CD14-positive monocyte (primary cell): ENCODE measurements at regions of chr21 and their contacts with region 1.

Region 1: GRCh38 chr21:45287438-45288391 is at the start of gene POFUT2:
- DNase-seq: peak; percentile 95 to 97 (median 97)
- H3K4me3 ChIP-seq: peak within 1 kb of the TSS; percentile 67 to 87 (median 82)
- H3K4me3 Mint-ChIP-seq: peak within 1 kb of the TSS; percentile 81 to 82
- H3K27ac ChIP-seq: peak within 1 kb of the TSS in 1 of 2 donors; percentile 81
- H3K27ac Mint-ChIP-seq: peak within 1 kb of the TSS; percentile 72 to 97 (median 90)
- H3K4me1 ChIP-seq: peaks cover 19 to 23% of the 10 kb centered on the region in 2 donors
- H3K4me1 Mint-ChIP-seq: peaks cover 20% of the 10 kb centered on the region
- H3K27me3 ChIP-seq: no peaks in the 10 kb centered on the region
- H3K27me3 Mint-ChIP-seq: no peaks in the 10 kb centered on the region
- CTCF ChIP-seq: no peak
- polyA plus RNA-seq, gene POFUT2: 1.8 to 21.3 (median 2.8) TPM

Region 2: DNA sequence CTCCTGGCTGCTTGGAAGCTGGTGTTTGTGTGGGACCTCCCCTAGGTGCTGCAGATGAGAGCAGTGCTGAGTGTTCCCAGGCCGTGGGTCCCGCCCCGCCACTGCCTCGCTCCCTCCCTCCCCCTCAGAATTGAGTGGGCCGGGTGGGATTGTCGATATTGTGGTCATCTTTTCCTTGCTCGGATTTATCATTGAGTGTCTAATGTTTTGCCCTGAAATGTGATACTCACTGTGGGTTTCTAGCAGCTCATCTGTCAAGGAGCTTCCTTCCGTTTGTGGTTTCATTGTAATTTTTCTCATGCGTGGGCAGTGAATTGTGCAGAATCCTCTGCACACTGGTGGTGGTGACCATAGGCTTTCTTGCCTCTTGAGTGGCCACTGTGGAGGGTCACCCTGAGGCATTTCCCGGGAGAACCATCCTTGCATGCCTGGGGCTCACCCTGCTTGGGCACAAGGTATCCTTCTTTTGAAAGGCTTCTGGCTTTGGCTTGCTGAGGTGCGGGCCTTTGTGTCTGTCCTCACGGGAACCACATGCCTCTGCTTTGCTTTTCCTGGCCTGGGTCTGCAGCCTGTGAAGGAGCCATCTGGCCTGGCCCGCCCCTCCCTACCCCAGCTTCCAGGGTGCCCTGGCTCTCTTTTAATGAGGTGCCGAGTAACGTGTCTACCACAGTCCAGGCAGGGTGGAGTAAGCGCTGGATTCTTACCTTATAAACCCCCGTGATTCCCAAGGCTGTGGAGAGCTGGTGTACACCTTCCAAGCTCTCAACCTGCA is 322.3 kb before region 1 on chr21:
- intact Hi-C with region 1: loop called in 1 of 2 experiments (anchors 5 kb)
- DNase-seq: peak; percentile 15 to 34 (median 18)
- H3K4me3 ChIP-seq: peak overlapping the region in 1 of 3 experiments; percentile 23
- H3K4me3 Mint-ChIP-seq: peak overlapping the region; percentile 41 to 65
- H3K27ac ChIP-seq: no peak overlapping the region
- H3K27ac Mint-ChIP-seq: peak overlapping the region in 6 of 7 donors; percentile 16 to 93 (median 35)
- H3K4me1 ChIP-seq: peaks cover 59% of the 10 kb centered on the region in 2 donors
- H3K4me1 Mint-ChIP-seq: peaks cover 60% of the 10 kb centered on the region
- H3K27me3 ChIP-seq: no peaks in the 10 kb centered on the region
- H3K27me3 Mint-ChIP-seq: peaks cover 1 to 9% (median 3%) of the 10 kb centered on the region in 3 donors
- CTCF ChIP-seq: no peak

Region 3: GRCh38 chr21:45140346-45140940 is 147.3 kb before region 1 on chr21:
- intact Hi-C with region 1: loop called (anchors 5 to 10 kb)
- DNase-seq: peak; percentile 74 to 81 (median 77)
- H3K4me3 ChIP-seq: no peak overlapping the region
- H3K4me3 Mint-ChIP-seq: no peak overlapping the region
- H3K27ac ChIP-seq: no peak overlapping the region
- H3K27ac Mint-ChIP-seq: peak overlapping the region in 2 of 7 donors; percentile 26 to 65
- H3K4me1 ChIP-seq: peaks cover 0 to 4% of the 10 kb centered on the region in 2 donors
- H3K4me1 Mint-ChIP-seq: peaks cover 6% of the 10 kb centered on the region
- H3K27me3 ChIP-seq: no peaks in the 10 kb centered on the region
- H3K27me3 Mint-ChIP-seq: peaks cover 0 to 2% (median 1%) of the 10 kb centered on the region in 3 donors
- CTCF ChIP-seq: peak; percentile 87

Region 4: DNA sequence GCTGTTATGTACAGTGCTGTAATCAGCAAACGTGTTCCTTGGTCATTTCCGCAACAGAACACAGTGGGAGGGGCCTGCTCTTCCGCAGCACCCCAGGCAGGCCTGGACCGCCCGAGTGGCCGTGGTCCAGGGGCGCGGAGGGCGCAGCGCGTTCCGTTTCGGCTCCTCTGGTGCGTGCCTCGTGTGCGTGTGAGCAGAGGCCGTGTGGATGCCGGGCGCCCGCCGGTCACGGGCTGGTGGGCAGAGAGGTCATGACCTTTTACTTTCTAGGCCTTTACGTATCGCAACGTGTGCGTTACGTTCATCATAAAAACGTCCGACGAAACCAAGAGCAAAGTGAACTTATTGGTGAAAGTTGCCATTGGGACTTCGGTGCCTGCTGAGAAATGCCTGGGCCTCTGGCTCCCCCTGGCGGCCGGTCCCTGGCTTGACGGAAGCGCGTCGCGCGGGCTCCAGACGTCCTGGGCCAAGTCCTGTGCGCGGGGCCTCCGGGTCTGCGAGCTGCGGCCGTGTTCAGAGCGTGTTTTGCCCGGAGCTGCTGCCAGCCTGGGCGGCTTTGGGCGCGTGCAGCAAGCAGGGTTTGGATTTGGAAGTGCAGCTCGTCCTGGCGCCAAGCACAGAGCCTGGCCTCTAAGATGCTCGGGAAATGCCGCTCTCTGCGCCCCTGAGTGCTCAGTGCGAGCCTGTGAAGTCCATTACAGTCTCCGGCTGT is 151.6 kb after region 1 on chr21:
- intact Hi-C with region 1: loop called (anchors 2 kb)
- DNase-seq: peak; percentile 85 to 90 (median 85)
- H3K4me3 ChIP-seq: peak overlapping the region; percentile 4 to 71 (median 20)
- H3K4me3 Mint-ChIP-seq: peak overlapping the region; percentile 67 to 80
- H3K27ac ChIP-seq: peak overlapping the region; percentile 45 to 78
- H3K27ac Mint-ChIP-seq: peak overlapping the region in 6 of 7 donors; percentile 72 to 87 (median 82)
- H3K4me1 ChIP-seq: peaks cover 16 to 21% of the 10 kb centered on the region in 2 donors
- H3K4me1 Mint-ChIP-seq: peaks cover 19% of the 10 kb centered on the region
- H3K27me3 ChIP-seq: no peaks in the 10 kb centered on the region
- H3K27me3 Mint-ChIP-seq: peaks cover 2 to 6% (median 4%) of the 10 kb centered on the region in 3 donors
- CTCF ChIP-seq: peak; percentile 95

Region 5: DNA sequence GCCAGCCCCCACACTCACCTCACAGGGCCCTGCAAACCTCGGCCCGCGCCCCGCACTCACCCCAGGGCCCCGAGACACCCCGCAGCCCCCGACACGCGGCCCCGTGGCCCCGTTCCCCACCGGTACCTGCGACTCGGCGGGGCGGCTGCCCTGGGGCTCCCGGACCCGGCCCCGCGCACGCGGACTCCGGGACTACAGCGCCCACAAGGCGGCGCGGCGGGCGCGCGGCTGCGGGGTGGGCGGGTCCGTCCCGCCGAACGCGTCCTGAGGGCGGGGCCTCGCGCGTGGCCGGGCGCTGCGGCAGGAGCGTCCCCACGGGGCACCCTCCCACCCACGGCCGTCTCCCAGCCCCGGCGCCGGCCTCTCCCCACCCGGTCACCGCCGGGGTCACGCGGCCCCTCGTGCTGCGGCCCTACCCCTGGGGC is 254.5 kb after region 1 on chr21 and contains the start of gene SLC19A1:
- intact Hi-C with region 1: loop called in 1 of 2 experiments (anchors 10 kb)
- DNase-seq: peak; percentile 65 to 70 (median 69)
- H3K4me3 ChIP-seq: peak within 1 kb of the TSS; percentile 42 to 77 (median 43)
- H3K4me3 Mint-ChIP-seq: peak within 1 kb of the TSS; percentile 70 to 78
- H3K27ac ChIP-seq: peak within 1 kb of the TSS; percentile 58 to 87
- H3K27ac Mint-ChIP-seq: peak within 1 kb of the TSS; percentile 68 to 84 (median 79)
- H3K4me1 ChIP-seq: peaks cover 32 to 49% of the 10 kb centered on the region in 2 donors
- H3K4me1 Mint-ChIP-seq: peaks cover 38% of the 10 kb centered on the region
- H3K27me3 ChIP-seq: no peaks in the 10 kb centered on the region
- H3K27me3 Mint-ChIP-seq: peaks cover 0 to 6% (median 0%) of the 10 kb centered on the region in 3 donors
- CTCF ChIP-seq: peak; percentile 49
- polyA plus RNA-seq, gene SLC19A1: 25.0 to 53.0 (median 39.9) TPM

Region 6: DNA sequence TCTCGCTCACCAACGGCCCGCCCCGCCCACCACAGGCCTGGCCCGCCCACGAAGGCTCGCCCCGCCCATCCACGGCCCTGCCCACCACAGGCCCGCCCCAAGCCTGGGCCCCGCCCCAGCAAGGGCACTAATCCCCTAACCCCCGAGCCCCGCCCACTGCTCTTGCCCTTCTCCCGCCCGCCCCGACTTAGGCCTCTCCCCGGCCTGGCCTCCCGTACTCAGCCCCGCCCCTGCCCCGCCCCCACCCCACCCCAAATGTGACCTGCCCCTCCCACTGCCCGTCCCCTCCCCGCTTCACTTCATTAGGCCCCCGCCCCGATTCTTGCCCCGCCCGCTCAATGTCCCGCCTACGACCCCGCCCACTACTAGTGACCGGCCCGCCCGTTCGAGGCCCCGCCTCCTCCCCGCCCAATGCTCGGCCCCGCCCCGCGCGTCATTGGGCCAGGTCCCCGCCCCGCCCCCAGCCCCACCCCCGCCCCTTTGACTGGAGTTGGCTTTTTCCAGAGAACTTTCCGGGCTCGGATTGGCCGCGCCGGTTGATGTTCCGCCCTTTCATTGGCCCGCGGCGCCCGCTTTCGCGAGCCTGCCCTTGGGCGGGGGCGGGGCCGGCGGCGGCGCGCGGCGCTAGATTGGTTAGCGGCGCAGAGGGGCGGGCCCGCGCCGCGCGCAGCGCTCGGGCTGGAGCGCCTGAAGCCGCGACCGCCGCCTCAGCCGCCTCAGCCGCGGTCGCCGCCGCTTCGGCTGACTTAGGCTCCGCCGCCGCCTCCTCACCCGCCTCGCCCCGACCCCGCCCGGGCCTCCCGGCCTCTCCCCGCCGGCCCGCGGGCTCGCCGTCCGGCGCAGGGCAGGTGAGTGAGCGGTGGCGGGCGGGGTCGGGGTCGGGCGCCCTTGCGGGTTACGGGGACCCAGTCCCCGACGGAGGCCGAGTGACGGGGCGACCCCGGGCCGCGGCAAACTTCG is 355.6 kb after region 1 on chr21 and contains the start of gene PCBP3:
- intact Hi-C with region 1: loop called in 1 of 2 experiments (anchors 5 kb)
- DNase-seq: peak; percentile 92 to 95 (median 93)
- H3K4me3 ChIP-seq: peak within 1 kb of the TSS in 2 of 3 experiments; percentile 46 to 63
- H3K4me3 Mint-ChIP-seq: peak within 1 kb of the TSS; percentile 74 to 87
- H3K27ac ChIP-seq: no peak within 1 kb of the TSS
- H3K27ac Mint-ChIP-seq: peak within 1 kb of the TSS in 1 of 7 donors; percentile 68
- H3K4me1 ChIP-seq: peaks cover 10 to 28% of the 10 kb centered on the region in 2 donors
- H3K4me1 Mint-ChIP-seq: peaks cover 24% of the 10 kb centered on the region
- H3K27me3 ChIP-seq: peaks cover 7 to 18% of the 10 kb centered on the region in 2 donors
- H3K27me3 Mint-ChIP-seq: peaks cover 17 to 26% (median 19%) of the 10 kb centered on the region in 3 donors
- CTCF ChIP-seq: no peak
- polyA plus RNA-seq, gene PCBP3: 0.34 to 0.49 TPM in 2 of 3 donors, not detected in the other